Mammary epithelial cell (primary cell): ENCODE measurements at regions of chr4 and their contacts with region 1.

Region 1: GRCh38 chr4:77862478-77863216 is at the start of gene MRPL1:
- DNase-seq: peak; percentile 94
- H3K4me3 ChIP-seq: peak within 1 kb of the TSS; percentile 63 to 94 (median 78)
- H3K27ac ChIP-seq: peak within 1 kb of the TSS; percentile 97
- H3K4me1 ChIP-seq: peaks cover 8% of the 10 kb centered on the region
- H3K27me3 ChIP-seq: no peaks in the 10 kb centered on the region
- CTCF ChIP-seq: no peak
- total RNA-seq, gene MRPL1: 24.8 to 40.9 TPM

Region 2: DNA sequence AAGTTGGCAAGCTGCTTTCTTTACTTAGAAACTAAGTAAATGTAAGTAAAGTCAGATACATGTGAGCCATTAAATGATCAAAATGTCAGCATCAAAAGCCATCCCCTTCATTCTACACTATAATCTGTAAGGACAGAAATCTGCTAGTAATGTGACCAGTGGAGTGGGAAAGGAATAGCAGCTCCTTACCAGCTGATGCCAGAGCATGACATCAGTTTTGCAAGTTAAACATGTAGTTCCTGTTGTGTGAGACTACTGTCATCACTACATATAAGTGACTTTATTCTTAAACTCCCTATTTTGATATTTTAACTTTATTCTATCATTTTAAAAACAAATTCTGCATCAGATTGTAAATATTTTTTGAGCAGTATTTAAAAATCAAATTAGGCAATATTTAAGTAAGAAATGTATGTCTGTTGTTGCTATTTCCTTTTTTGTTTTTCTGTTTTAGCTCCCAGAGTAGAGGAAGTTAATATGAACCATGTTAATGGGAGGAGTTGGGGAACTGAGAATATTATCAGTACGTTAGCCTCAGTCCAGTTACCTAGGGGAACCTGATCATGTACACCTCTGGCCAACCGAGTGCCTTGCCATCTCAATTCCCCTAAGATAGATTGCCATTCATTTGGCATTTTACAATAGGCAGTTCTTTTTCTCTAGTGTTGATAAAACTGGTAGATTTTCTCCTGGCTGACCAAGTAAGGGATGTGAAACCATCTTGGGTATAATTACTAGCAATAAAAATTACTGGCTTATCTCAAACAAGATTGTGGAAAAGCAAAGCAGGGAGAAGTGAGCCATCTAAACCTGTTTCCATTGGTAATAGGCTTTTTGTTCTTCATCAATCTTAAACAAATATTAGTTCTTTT is 821.6 kb before region 1 on chr4:
- CTCF ChIA-PET with region 1: no interaction called
- dilution Hi-C with region 1: no loop called
- in situ Hi-C with region 1: no loop called
- intact Hi-C with region 1: no loop called
- DNase-seq: no peak
- H3K4me3 ChIP-seq: no peak overlapping the region
- H3K27ac ChIP-seq: no peak overlapping the region
- H3K4me1 ChIP-seq: peaks cover 20% of the 10 kb centered on the region
- H3K27me3 ChIP-seq: no peaks in the 10 kb centered on the region
- CTCF ChIP-seq: no peak

Region 3: GRCh38 chr4:77465271-77465670 is 397.4 kb before region 1 on chr4:
- CTCF ChIA-PET with region 1: no interaction called
- dilution Hi-C with region 1: no loop called
- in situ Hi-C with region 1: no loop called
- intact Hi-C with region 1: loop called (anchors 1 kb)
- DNase-seq: peak; percentile 28
- H3K4me3 ChIP-seq: no peak overlapping the region
- H3K27ac ChIP-seq: no peak overlapping the region
- H3K4me1 ChIP-seq: no peaks in the 10 kb centered on the region
- H3K27me3 ChIP-seq: no peaks in the 10 kb centered on the region
- CTCF ChIP-seq: peak; percentile 54 to 74

Region 4: GRCh38 chr4:77697860-77698590 is 164.6 kb before region 1 on chr4:
- CTCF ChIA-PET with region 1: no interaction called
- dilution Hi-C with region 1: no loop called
- in situ Hi-C with region 1: no loop called
- intact Hi-C with region 1: loop called (anchors 2 kb)
- DNase-seq: peak; percentile 64
- H3K4me3 ChIP-seq: no peak overlapping the region
- H3K27ac ChIP-seq: no peak overlapping the region
- H3K4me1 ChIP-seq: peaks cover 30% of the 10 kb centered on the region
- H3K27me3 ChIP-seq: no peaks in the 10 kb centered on the region
- CTCF ChIP-seq: peak; percentile 63 to 77

Region 5: GRCh38 chr4:77777135-77777807 is 85.4 kb before region 1 on chr4:
- CTCF ChIA-PET with region 1: no interaction called
- dilution Hi-C with region 1: no loop called
- in situ Hi-C with region 1: no loop called
- intact Hi-C with region 1: no loop called
- DNase-seq: peak; percentile 40
- H3K4me3 ChIP-seq: no peak overlapping the region
- H3K27ac ChIP-seq: no peak overlapping the region
- H3K4me1 ChIP-seq: peaks cover 11% of the 10 kb centered on the region
- H3K27me3 ChIP-seq: no peaks in the 10 kb centered on the region
- CTCF ChIP-seq: no peak

Region 6: GRCh38 chr4:77819843-77820648 is 42.6 kb before region 1 on chr4:
- CTCF ChIA-PET with region 1: interaction called, 5 read pairs
- dilution Hi-C with region 1: no loop called
- in situ Hi-C with region 1: no loop called
- intact Hi-C with region 1: loop called (anchors 1 kb)
- DNase-seq: peak; percentile 86
- H3K4me3 ChIP-seq: peak overlapping the region; percentile 72 to 90 (median 83)
- H3K27ac ChIP-seq: peak overlapping the region; percentile 93
- H3K4me1 ChIP-seq: peaks cover 15% of the 10 kb centered on the region
- H3K27me3 ChIP-seq: no peaks in the 10 kb centered on the region
- CTCF ChIP-seq: no peak

Region 7: GRCh38 chr4:77881460-77882278 is 19.0 kb after region 1 on chr4:
- CTCF ChIA-PET with region 1: no interaction called
- dilution Hi-C with region 1: no loop called
- in situ Hi-C with region 1: no loop called
- intact Hi-C with region 1: loop called (anchors 1 kb)
- DNase-seq: peak; percentile 14
- H3K4me3 ChIP-seq: no peak overlapping the region
- H3K27ac ChIP-seq: peak overlapping the region; percentile 84
- H3K4me1 ChIP-seq: peaks cover 33% of the 10 kb centered on the region
- H3K27me3 ChIP-seq: no peaks in the 10 kb centered on the region
- CTCF ChIP-seq: no peak

Region 8: GRCh38 chr4:77931452-77932135 is 68.9 kb after region 1 on chr4:
- CTCF ChIA-PET with region 1: no interaction called
- dilution Hi-C with region 1: no loop called
- in situ Hi-C with region 1: no loop called
- intact Hi-C with region 1: loop called (anchors 5 kb)
- DNase-seq: peak; percentile 73
- H3K4me3 ChIP-seq: no peak overlapping the region
- H3K27ac ChIP-seq: peak overlapping the region; percentile 38
- H3K4me1 ChIP-seq: peaks cover 19% of the 10 kb centered on the region
- H3K27me3 ChIP-seq: no peaks in the 10 kb centered on the region
- CTCF ChIP-seq: no peak

Region 9: GRCh38 chr4:78040431-78040830 is 177.8 kb after region 1 on chr4:
- CTCF ChIA-PET with region 1: no interaction called
- dilution Hi-C with region 1: no loop called
- in situ Hi-C with region 1: no loop called
- intact Hi-C with region 1: no loop called
- DNase-seq: peak; percentile 31
- H3K4me3 ChIP-seq: no peak overlapping the region
- H3K27ac ChIP-seq: no peak overlapping the region
- H3K4me1 ChIP-seq: no peaks in the 10 kb centered on the region
- H3K27me3 ChIP-seq: no peaks in the 10 kb centered on the region
- CTCF ChIP-seq: no peak

Region 10: DNA sequence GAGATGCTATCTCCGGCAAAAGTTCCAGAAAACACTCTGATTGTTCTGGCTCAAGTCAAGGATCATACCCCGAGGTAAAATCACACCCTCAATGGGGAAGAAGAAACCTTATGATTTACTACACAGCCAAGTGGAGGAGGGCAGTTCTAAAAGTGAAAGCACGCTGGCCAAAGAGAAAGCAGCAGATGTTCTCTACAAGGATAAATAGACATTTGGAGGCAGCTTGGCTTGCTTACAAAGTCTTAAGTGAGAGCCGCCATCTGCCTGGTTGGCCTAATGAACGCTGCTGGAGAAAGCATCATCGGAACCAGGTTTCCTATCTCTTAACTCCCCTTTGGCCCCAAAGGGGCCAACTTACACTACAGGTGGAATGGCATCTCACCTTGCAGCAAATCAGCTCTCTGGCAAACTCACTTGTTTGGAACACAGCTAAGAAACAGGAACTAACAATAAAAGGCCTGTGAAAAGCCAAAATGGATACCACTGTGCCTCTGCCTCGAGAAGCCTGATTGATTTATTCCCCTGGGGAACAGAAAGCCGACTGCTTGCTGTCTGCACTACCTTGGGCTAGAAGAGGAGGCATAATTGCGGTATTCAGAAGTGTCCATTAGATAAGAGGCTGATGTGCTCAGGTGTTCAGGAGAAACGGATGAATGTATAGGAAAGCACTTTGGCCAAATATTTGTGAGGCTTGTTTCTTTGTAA is 217.2 kb after region 1 on chr4:
- CTCF ChIA-PET with region 1: no interaction called
- dilution Hi-C with region 1: no loop called
- in situ Hi-C with region 1: no loop called
- intact Hi-C with region 1: no loop called
- DNase-seq: no peak
- H3K4me3 ChIP-seq: no peak overlapping the region
- H3K27ac ChIP-seq: no peak overlapping the region
- H3K4me1 ChIP-seq: no peaks in the 10 kb centered on the region
- H3K27me3 ChIP-seq: no peaks in the 10 kb centered on the region
- CTCF ChIP-seq: no peak